HEK293 (cell line): ENCODE measurements at regions of chr5 and their contacts with region 1.

Region 1: DNA sequence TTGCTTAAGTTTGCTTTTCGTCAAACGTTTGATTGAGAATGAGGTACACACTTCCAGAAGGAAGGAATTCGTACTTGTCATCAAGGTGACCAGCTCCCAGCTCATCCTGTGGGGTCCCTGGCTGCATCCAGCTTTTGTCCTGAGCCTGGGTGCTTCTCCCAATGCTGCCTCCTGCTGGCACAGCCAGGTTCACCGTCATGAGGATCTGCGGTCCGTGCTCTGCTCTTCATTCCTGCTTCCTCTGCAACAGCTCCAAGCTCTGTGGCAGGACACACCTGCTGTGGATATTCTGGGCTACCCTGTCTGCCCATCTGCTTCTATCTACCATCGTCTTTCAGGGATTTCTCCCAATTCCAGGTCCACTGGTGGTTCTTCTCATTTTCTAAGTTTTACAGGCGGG is 13.3 kb upstream of the UBE2QL1 start:
- H3K4me3 ChIP-seq: no peak overlapping the region
- H3K27ac ChIP-seq: no peak overlapping the region
- H3K4me1 ChIP-seq: no peaks in the 10 kb centered on the region
- CTCF ChIP-seq: no peak

Region 2: DNA sequence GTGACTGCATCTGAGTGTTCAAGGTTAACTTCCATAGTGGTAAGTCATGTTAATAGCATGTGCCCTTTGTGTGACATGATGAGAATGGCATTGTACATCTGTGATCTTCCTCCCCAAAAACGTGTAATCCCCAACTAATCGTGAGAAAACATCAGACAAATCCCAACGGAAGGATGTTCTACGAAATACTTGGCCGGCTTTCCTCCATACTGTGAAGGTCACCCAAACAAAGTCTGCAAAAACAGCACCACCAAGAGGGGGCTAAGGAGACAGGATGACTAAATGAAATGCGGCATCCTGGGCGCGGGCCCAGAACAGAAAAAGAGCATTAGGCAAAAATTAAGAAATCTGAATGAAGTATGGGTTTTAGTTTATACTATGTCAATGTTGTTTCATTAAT is 138.8 kb before region 1 on chr5:
- CTCF ChIA-PET with region 1: no interaction called
- POLR2A ChIA-PET with region 1: no interaction called
- H3K4me3 ChIP-seq: no peak overlapping the region
- H3K27ac ChIP-seq: no peak overlapping the region
- H3K4me1 ChIP-seq: no peaks in the 10 kb centered on the region
- CTCF ChIP-seq: no peak

Region 3: DNA sequence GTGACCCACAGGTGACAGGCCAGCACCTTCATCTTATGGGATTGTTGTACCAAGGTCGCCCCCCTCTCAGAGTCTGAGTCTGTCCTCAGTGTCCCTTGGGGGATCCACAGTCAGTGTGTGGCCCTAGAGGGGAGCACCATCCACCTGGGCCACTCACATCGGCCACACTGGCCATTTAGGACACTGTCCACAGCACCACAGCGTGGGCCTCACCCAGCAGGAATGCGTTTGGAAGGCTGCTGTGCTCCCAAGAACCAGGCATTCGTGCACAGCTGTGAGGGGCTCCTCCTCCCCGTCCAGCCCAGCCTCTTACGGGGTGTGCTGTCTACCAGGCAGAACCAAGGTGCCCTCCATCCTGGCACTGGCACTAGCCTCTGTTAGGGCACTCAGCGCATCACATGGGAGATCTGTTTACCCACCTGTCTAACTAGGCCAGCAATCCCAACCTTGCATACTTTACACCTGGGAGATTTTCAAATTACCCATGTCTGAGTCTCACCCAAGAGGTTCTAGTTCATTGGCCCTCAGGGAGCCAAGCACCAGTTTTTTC is 11.2 kb before region 1 on chr5:
- CTCF ChIA-PET with region 1: interaction called, 16 read pairs
- POLR2A ChIA-PET with region 1: interaction called, 9 read pairs
- H3K4me3 ChIP-seq: no peak overlapping the region
- H3K27ac ChIP-seq: no peak overlapping the region
- H3K4me1 ChIP-seq: peaks cover 6% of the 10 kb centered on the region
- CTCF ChIP-seq: no peak